Naive thymus-derived CD4-positive, alpha-beta T cell (primary cell): ENCODE measurements at regions of chr12 and their contacts with region 1.

Region 1: DNA sequence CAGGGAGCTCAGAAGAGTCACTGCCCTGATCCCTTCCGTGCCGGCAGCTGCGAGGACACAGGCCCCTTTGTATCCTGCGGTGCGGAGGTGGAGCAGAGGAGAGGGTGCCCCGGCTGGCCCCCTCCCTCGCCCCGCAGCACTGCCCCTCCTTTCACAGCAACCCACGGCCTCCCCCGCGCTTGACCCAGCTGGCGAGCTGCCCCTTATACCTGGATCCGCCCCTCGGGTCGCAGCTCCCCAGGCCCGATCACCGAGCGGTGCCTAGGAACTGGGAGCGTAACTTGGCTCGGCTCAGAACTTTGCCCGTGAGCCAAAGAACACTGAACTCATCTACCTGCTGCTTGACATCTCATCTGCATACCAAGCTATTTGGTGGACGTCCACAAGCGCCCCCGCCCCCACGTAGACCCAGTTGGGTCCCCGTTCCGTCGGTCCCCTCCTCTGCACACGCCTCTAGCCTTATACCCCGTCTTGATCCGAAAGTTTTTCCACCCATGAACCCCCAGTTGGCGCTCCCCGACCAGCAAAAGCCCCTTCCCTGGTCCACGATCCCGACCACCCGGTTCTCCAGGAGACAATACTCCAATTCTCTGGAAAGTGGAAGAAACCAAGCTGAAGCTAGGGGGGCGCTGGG is 697 bp upstream of the DNAJC14 start:
- DNase-seq: peak in 5 of 9 donors; percentile 16 to 44 (median 20)
- ATAC-seq: peak; percentile 2
- H3K4me3 ChIP-seq: peak overlapping the region; percentile 99
- H3K4me3 Mint-ChIP-seq: peak overlapping the region; percentile 88 to 99 (median 99)
- H3K27ac ChIP-seq: peak overlapping the region; percentile 84
- H3K27ac Mint-ChIP-seq: peak overlapping the region; percentile 85 to 98 (median 95)
- H3K4me1 ChIP-seq: peaks cover 37 to 40% of the 10 kb centered on the region in 2 donors
- H3K4me1 Mint-ChIP-seq: peaks cover 42 to 69% (median 53%) of the 10 kb centered on the region in 7 donors
- H3K27me3 ChIP-seq: no peaks in the 10 kb centered on the region
- H3K27me3 Mint-ChIP-seq: no peaks in the 10 kb centered on the region

Region 2: GRCh38 chr12:55705782-55706402 is 124.2 kb before region 1 on chr12:
- CTCF ChIA-PET with region 1: no interaction called
- POLR2A ChIA-PET with region 1: no interaction called
- intact Hi-C with region 1: no loop called
- DNase-seq: no peak
- ATAC-seq: no peak
- H3K4me3 ChIP-seq: no peak overlapping the region
- H3K4me3 Mint-ChIP-seq: peak overlapping the region in 4 of 10 donors; percentile 29 to 68 (median 43)
- H3K27ac ChIP-seq: no peak overlapping the region
- H3K27ac Mint-ChIP-seq: no peak overlapping the region
- H3K4me1 ChIP-seq: peaks cover 4 to 7% of the 10 kb centered on the region in 2 donors
- H3K4me1 Mint-ChIP-seq: peaks cover 13 to 23% (median 20%) of the 10 kb centered on the region in 7 donors
- H3K27me3 ChIP-seq: no peaks in the 10 kb centered on the region
- H3K27me3 Mint-ChIP-seq: peaks cover 0 to 58% (median 25%) of the 10 kb centered on the region in 5 donors

Region 3: GRCh38 chr12:55748230-55748993 is 81.7 kb before region 1 on chr12:
- CTCF ChIA-PET with region 1: no interaction called
- POLR2A ChIA-PET with region 1: no interaction called
- intact Hi-C with region 1: no loop called
- DNase-seq: no peak
- ATAC-seq: no peak
- H3K4me3 ChIP-seq: no peak overlapping the region
- H3K4me3 Mint-ChIP-seq: no peak overlapping the region
- H3K27ac ChIP-seq: no peak overlapping the region
- H3K27ac Mint-ChIP-seq: peak overlapping the region; percentile 42 to 88 (median 69)
- H3K4me1 ChIP-seq: peaks cover 0 to 16% of the 10 kb centered on the region in 2 donors
- H3K4me1 Mint-ChIP-seq: peaks cover 25 to 40% (median 32%) of the 10 kb centered on the region in 7 donors
- H3K27me3 ChIP-seq: no peaks in the 10 kb centered on the region
- H3K27me3 Mint-ChIP-seq: no peaks in the 10 kb centered on the region

Region 4: GRCh38 chr12:55931780-55932550 is 101.9 kb after region 1 on chr12:
- CTCF ChIA-PET with region 1: interaction called, 22 read pairs
- POLR2A ChIA-PET with region 1: interaction called, 274 read pairs
- intact Hi-C with region 1: loop called (anchors 1 kb)
- DNase-seq: peak in 1 of 9 donors; percentile 54
- ATAC-seq: no peak
- H3K4me3 ChIP-seq: peak overlapping the region; percentile 82
- H3K4me3 Mint-ChIP-seq: peak overlapping the region; percentile 96 to 100 (median 98)
- H3K27ac ChIP-seq: peak overlapping the region; percentile 90
- H3K27ac Mint-ChIP-seq: peak overlapping the region; percentile 96 to 100 (median 98)
- H3K4me1 ChIP-seq: peaks cover 29 to 56% of the 10 kb centered on the region in 2 donors
- H3K4me1 Mint-ChIP-seq: peaks cover 34 to 61% (median 47%) of the 10 kb centered on the region in 7 donors
- H3K27me3 ChIP-seq: no peaks in the 10 kb centered on the region
- H3K27me3 Mint-ChIP-seq: peaks cover 0 to under 1% (median 0%) of the 10 kb centered on the region in 5 donors

Region 5: DNA sequence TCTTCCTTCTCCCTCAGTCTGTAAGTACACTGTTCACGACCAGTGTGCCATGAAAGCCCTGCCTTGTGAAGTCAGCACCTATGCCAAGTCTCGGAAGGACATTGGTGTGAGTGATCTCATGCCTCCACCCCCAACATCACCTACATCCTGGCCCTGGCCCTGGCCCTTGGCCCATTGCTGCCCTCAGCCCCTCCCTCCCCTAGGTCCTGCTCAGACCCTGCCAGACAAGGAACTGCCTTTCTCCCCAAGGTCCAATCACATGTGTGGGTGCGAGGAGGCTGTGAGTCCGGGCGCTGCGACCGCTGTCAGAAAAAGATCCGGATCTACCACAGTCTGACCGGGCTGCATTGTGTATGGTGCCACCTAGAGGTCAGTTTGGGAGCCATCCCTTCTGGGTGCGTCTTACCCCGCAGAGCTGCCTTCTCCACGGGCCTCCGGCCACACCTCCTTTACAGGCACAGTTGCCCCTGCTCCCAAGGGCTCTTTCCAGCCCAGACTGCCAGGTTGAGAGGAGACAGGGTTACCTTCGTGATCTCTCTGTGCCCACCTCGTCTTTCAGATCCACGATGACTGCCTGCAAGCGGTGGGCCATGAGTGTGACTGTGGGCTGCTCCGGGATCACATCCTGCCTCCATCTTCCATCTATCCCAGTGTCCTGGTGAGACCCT is 110.1 kb after region 1 on chr12:
- CTCF ChIA-PET with region 1: interaction called, 22 read pairs
- POLR2A ChIA-PET with region 1: interaction called, 274 read pairs
- intact Hi-C with region 1: loop called in 1 of 2 experiments (anchors 1 kb)
- DNase-seq: peak; percentile 62 to 88 (median 82)
- ATAC-seq: peak; percentile 98
- H3K4me3 ChIP-seq: no peak overlapping the region
- H3K4me3 Mint-ChIP-seq: peak overlapping the region; percentile 57 to 99 (median 72)
- H3K27ac ChIP-seq: peak overlapping the region; percentile 64
- H3K27ac Mint-ChIP-seq: peak overlapping the region; percentile 55 to 100 (median 97)
- H3K4me1 ChIP-seq: peaks cover 16 to 63% of the 10 kb centered on the region in 2 donors
- H3K4me1 Mint-ChIP-seq: peaks cover 65 to 98% (median 93%) of the 10 kb centered on the region in 7 donors
- H3K27me3 ChIP-seq: no peaks in the 10 kb centered on the region
- H3K27me3 Mint-ChIP-seq: no peaks in the 10 kb centered on the region

Region 6: DNA sequence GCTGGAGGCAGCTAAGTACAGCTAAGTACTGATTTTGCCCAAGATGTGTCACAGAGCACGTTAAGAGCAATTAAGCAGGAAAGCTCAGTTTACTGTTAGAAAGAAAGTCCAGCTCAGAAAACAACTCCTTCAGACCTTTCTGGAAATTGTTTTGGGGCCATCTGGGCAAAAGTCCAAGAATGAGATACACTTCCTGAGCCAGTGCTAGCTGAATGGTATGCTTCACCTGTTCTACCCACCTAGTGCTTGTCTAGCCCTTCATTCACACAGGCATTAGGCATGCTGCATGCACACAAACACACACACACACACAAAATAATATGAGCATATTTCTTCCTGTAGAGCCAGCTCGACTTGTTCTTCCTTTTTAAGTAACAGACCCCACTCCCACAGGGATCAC is 184.1 kb after region 1 on chr12:
- CTCF ChIA-PET with region 1: no interaction called
- POLR2A ChIA-PET with region 1: no interaction called
- intact Hi-C with region 1: no loop called
- DNase-seq: no peak
- ATAC-seq: no peak
- H3K4me3 ChIP-seq: no peak overlapping the region
- H3K4me3 Mint-ChIP-seq: no peak overlapping the region
- H3K27ac ChIP-seq: no peak overlapping the region
- H3K27ac Mint-ChIP-seq: peak overlapping the region in 2 of 9 donors; percentile 52 to 65
- H3K4me1 ChIP-seq: no peaks in the 10 kb centered on the region
- H3K4me1 Mint-ChIP-seq: peaks cover 0 to 22% (median 0%) of the 10 kb centered on the region in 7 donors
- H3K27me3 ChIP-seq: no peaks in the 10 kb centered on the region
- H3K27me3 Mint-ChIP-seq: no peaks in the 10 kb centered on the region

Region 7: GRCh38 chr12:56622535-56622934 is 792.5 kb after region 1 on chr12:
- CTCF ChIA-PET with region 1: no interaction called
- POLR2A ChIA-PET with region 1: no interaction called
- intact Hi-C with region 1: no loop called
- DNase-seq: no peak
- ATAC-seq: no peak
- H3K4me3 ChIP-seq: no peak overlapping the region
- H3K4me3 Mint-ChIP-seq: peak overlapping the region in 4 of 10 donors; percentile 10 to 49 (median 20)
- H3K27ac ChIP-seq: no peak overlapping the region
- H3K27ac Mint-ChIP-seq: peak overlapping the region in 7 of 9 donors; percentile 22 to 62 (median 46)
- H3K4me1 ChIP-seq: peaks cover 17 to 19% of the 10 kb centered on the region in 2 donors
- H3K4me1 Mint-ChIP-seq: peaks cover 34 to 82% (median 64%) of the 10 kb centered on the region in 7 donors
- H3K27me3 ChIP-seq: no peaks in the 10 kb centered on the region
- H3K27me3 Mint-ChIP-seq: no peaks in the 10 kb centered on the region

Region 8: DNA sequence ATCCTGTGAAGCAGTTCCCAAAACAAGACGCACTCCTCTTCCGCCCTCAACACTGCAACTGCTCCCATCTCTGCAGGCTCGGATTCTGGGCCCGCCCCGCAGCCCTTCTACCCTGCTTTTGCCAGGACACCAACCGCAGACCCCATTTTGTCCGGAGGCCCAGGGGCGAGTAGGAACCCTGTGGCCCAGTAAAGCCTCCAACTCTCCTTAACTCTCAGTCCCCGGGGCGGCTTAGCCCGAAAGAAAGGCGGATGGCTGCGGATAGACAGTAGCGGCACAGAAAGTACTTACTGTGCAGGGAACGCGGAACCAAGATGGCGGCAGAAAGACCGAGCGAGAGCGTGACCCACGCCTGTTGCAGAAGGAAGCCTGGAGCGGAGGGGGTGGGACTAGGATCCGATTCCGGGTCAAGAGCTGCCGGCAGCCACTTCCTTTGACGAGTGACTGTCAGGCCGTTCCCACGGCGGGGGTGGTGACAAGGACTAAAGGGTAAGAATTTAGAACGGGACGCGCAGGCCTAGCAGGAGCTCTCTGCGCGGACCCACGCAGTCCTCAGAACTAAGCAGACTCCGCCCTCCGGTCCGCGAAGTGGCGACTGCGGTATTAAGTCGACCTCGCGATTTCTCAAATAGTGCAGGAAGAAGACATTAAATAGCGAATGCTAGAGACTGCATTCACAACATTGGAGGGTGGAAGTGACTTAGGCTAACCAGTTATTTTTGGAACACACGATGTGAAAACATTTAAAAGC is 895.1 kb after region 1 on chr12 and contains the start of gene NACA:
- CTCF ChIA-PET with region 1: no interaction called
- POLR2A ChIA-PET with region 1: no interaction called
- intact Hi-C with region 1: loop called in 1 of 2 experiments (anchors 5 kb)
- DNase-seq: peak; percentile 85 to 99 (median 96)
- ATAC-seq: peak; percentile 95
- H3K4me3 ChIP-seq: peak within 1 kb of the TSS; percentile 100
- H3K4me3 Mint-ChIP-seq: peak within 1 kb of the TSS; percentile 94 to 100 (median 97)
- H3K27ac ChIP-seq: peak within 1 kb of the TSS; percentile 87
- H3K27ac Mint-ChIP-seq: peak within 1 kb of the TSS; percentile 94 to 100 (median 98)
- H3K4me1 ChIP-seq: peaks cover 40 to 43% of the 10 kb centered on the region in 2 donors
- H3K4me1 Mint-ChIP-seq: peaks cover 39 to 53% (median 49%) of the 10 kb centered on the region in 7 donors
- H3K27me3 ChIP-seq: no peaks in the 10 kb centered on the region
- H3K27me3 Mint-ChIP-seq: no peaks in the 10 kb centered on the region
- total RNA-seq, gene NACA: 834 to 1,486 (median 1,355) TPM